PC-9 (cell line): ENCODE measurements at regions of chr2 and their contacts with region 1.

Region 1: GRCh38 chr2:75627895-75628504 is 18.6 kb upstream of the MRPL19 start:
- DNase-seq: peak; percentile 69 to 73
- H3K4me3 ChIP-seq: no peak overlapping the region
- H3K27ac ChIP-seq: no peak overlapping the region
- H3K4me1 ChIP-seq: no peaks in the 10 kb centered on the region
- H3K27me3 ChIP-seq: no peaks in the 10 kb centered on the region
- CTCF ChIP-seq: peak; percentile 98

Region 2: DNA sequence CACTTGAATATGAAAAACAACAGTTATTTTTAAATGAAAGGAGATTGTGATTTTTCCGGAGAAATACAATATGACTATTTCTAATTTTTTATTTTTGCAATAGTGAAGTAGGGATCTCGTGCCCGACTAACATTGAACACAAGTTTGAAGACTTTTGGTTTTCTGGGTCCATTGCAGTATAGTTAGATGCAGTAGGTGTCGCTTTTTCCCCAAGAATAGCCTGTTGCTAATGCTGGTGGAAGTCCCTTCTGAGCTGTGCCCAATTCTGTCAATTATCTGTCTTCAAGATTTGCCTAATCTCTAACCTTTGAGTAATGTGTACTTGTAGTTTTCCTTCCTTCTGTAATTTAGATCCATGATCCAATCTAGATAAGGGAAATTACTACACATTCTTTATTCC is 937.4 kb before region 1 on chr2:
- CTCF ChIA-PET with region 1: no interaction called
- POLR2A ChIA-PET with region 1: no interaction called
- intact Hi-C with region 1: loop called (anchors 5 kb)
- DNase-seq: peak; percentile 24 to 64
- H3K4me3 ChIP-seq: no peak overlapping the region
- H3K27ac ChIP-seq: no peak overlapping the region
- H3K4me1 ChIP-seq: peaks cover 22% of the 10 kb centered on the region
- H3K27me3 ChIP-seq: no peaks in the 10 kb centered on the region
- CTCF ChIP-seq: peak; percentile 93

Region 3: GRCh38 chr2:74862020-74862964 is 765.7 kb before region 1 on chr2:
- CTCF ChIA-PET with region 1: no interaction called
- POLR2A ChIA-PET with region 1: no interaction called
- intact Hi-C with region 1: no loop called
- DNase-seq: no peak
- H3K4me3 ChIP-seq: no peak overlapping the region
- H3K27ac ChIP-seq: peak overlapping the region; percentile 92
- H3K4me1 ChIP-seq: peaks cover 55% of the 10 kb centered on the region
- H3K27me3 ChIP-seq: no peaks in the 10 kb centered on the region
- CTCF ChIP-seq: no peak

Region 4: GRCh38 chr2:75053484-75054112 is 574.4 kb before region 1 on chr2:
- CTCF ChIA-PET with region 1: no interaction called
- POLR2A ChIA-PET with region 1: no interaction called
- intact Hi-C with region 1: loop called (anchors 5 kb)
- DNase-seq: peak; percentile 37 to 57
- H3K4me3 ChIP-seq: no peak overlapping the region
- H3K27ac ChIP-seq: no peak overlapping the region
- H3K4me1 ChIP-seq: no peaks in the 10 kb centered on the region
- H3K27me3 ChIP-seq: no peaks in the 10 kb centered on the region
- CTCF ChIP-seq: peak; percentile 93

Region 5: GRCh38 chr2:75064691-75065396 is 563.2 kb before region 1 on chr2:
- CTCF ChIA-PET with region 1: no interaction called
- POLR2A ChIA-PET with region 1: no interaction called
- intact Hi-C with region 1: loop called (anchors 5 kb)
- DNase-seq: peak; percentile 55
- H3K4me3 ChIP-seq: no peak overlapping the region
- H3K27ac ChIP-seq: no peak overlapping the region
- H3K4me1 ChIP-seq: no peaks in the 10 kb centered on the region
- H3K27me3 ChIP-seq: no peaks in the 10 kb centered on the region
- CTCF ChIP-seq: peak; percentile 94

Region 6: DNA sequence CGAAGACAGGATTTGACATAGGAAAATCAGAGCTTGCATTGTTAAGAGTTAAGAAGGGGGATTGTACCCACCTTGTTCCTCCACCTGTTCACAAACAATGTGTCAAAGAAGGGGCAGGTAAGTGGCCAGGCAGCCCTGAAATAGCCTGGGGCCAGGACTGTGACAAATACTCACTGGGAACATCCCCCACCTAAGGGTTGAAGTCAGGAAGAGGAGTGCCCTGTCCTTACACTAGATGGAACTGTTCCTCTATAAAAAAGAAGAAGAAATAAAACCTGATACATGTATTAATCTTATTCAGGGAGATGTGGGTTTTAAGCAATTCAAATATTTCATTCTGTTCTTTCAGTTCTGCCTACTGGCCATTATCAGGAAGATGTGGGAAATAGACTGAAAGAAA is 470.6 kb before region 1 on chr2:
- CTCF ChIA-PET with region 1: no interaction called
- POLR2A ChIA-PET with region 1: no interaction called
- intact Hi-C with region 1: loop called (anchors 2 kb)
- DNase-seq: peak; percentile 10 to 58
- H3K4me3 ChIP-seq: no peak overlapping the region
- H3K27ac ChIP-seq: no peak overlapping the region
- H3K4me1 ChIP-seq: peaks cover 39% of the 10 kb centered on the region
- H3K27me3 ChIP-seq: no peaks in the 10 kb centered on the region
- CTCF ChIP-seq: peak; percentile 68

Region 7: DNA sequence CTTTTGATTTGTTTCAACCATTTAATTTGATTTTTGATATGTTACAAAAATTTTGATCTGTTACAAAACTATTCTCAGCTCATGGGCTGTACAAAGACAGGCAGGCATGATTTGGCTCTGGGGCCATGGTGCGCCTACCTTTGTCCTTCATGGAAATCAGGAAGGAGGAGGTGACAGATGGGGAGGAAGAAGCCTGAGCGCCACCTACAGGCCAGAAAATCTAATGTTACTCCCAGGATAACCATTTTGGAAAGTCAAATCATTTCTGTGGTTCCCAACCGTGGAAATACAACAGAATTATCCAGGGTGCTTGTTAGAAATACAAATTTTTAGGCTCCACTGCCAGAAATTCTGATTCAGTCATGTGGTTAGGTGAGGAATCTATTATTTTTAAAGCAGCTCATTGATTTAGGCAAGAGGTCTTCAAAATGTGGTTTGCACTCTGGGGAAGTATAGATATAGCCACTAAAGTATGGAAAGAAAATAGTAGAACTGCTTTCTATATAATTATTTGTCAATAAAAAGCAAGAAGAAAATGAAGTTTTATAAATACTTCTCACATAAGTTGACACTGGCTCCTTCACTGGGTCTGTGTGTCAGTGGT is 161.2 kb before region 1 on chr2:
- CTCF ChIA-PET with region 1: interaction called, 8 read pairs
- POLR2A ChIA-PET with region 1: no interaction called
- intact Hi-C with region 1: loop called (anchors 1 kb)
- DNase-seq: peak in 1 of 2 experiments; percentile 33
- H3K4me3 ChIP-seq: no peak overlapping the region
- H3K27ac ChIP-seq: no peak overlapping the region
- H3K4me1 ChIP-seq: peaks cover 14% of the 10 kb centered on the region; the same call in 1 of the 2 replicates
- H3K27me3 ChIP-seq: no peaks in the 10 kb centered on the region
- CTCF ChIP-seq: peak; percentile 73

Region 8: GRCh38 chr2:75574114-75574513 is 53.9 kb before region 1 on chr2:
- CTCF ChIA-PET with region 1: no interaction called
- POLR2A ChIA-PET with region 1: no interaction called
- intact Hi-C with region 1: loop called (anchors 1 kb)
- DNase-seq: no peak
- H3K4me3 ChIP-seq: no peak overlapping the region
- H3K27ac ChIP-seq: no peak overlapping the region
- H3K4me1 ChIP-seq: peaks cover 27% of the 10 kb centered on the region
- H3K27me3 ChIP-seq: no peaks in the 10 kb centered on the region
- CTCF ChIP-seq: peak; percentile 51; the same call in 1 of the 2 replicates

Region 9: DNA sequence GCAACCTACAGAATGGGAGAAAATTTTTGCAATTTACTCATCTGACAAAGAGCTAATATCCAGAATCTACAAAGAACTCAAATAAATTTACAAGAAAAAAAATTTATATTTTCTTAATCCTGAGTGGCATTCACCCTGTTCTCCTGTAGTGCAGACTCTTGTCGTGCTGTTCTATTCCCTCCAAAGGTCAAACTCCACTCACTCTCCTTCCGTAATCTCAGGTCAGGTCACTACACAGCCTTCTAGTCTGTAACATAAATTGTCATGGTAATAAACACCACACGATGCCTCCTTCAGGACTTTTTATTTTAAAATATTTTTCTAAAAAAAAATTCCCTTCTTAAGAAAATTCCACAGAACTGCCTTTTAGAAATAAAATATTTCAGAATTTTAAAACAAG is 500.6 kb after region 1 on chr2:
- CTCF ChIA-PET with region 1: no interaction called
- POLR2A ChIA-PET with region 1: no interaction called
- intact Hi-C with region 1: no loop called
- DNase-seq: no peak
- H3K4me3 ChIP-seq: no peak overlapping the region
- H3K27ac ChIP-seq: no peak overlapping the region
- H3K4me1 ChIP-seq: no peaks in the 10 kb centered on the region
- H3K27me3 ChIP-seq: no peaks in the 10 kb centered on the region
- CTCF ChIP-seq: no peak